Dendritic cell treated with granulocyte-macrophage colony-stimulating factor and Interleukin-4, amounts not matched to agents 40 ng/mL and 50 ng/mL, for 4 days (primary cell): ENCODE measurements at regions of chr9 and their contacts with region 1.

Region 1: DNA sequence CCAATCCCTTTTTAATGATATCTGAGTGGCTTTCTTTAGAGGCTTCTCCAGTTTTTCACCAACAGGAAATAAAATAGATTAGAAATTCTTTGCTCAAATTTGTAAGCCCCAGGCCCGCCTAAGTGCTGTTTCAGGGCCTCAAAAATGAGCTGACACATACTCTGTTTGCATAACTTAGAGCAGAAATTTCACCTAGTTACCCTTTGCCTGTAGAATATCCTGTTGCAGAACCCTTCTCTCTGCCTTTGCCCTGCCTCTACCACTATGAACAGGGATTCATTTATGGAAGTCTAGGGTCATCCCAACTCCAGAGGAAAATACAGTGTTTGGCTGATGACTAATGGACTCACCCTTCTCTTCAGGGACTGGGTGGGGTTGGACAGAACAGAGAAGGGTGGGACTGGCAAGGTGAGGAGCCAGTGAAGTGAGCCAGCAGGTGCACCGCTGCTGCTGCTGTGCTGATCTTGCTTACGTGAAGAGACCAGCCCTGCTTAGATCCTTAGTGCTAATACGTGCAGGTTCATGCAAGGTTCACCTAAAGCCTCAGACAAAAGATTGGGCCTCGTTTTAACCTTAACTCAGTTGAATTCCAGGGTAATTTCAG is 22.8 kb downstream of the OSTF1 start:
- H3K4me3 Mint-ChIP-seq: no peak overlapping the region
- H3K27ac Mint-ChIP-seq: no peak overlapping the region
- H3K4me1 Mint-ChIP-seq: peaks cover 42% of the 10 kb centered on the region
- H3K27me3 Mint-ChIP-seq: no peaks in the 10 kb centered on the region

Region 2: DNA sequence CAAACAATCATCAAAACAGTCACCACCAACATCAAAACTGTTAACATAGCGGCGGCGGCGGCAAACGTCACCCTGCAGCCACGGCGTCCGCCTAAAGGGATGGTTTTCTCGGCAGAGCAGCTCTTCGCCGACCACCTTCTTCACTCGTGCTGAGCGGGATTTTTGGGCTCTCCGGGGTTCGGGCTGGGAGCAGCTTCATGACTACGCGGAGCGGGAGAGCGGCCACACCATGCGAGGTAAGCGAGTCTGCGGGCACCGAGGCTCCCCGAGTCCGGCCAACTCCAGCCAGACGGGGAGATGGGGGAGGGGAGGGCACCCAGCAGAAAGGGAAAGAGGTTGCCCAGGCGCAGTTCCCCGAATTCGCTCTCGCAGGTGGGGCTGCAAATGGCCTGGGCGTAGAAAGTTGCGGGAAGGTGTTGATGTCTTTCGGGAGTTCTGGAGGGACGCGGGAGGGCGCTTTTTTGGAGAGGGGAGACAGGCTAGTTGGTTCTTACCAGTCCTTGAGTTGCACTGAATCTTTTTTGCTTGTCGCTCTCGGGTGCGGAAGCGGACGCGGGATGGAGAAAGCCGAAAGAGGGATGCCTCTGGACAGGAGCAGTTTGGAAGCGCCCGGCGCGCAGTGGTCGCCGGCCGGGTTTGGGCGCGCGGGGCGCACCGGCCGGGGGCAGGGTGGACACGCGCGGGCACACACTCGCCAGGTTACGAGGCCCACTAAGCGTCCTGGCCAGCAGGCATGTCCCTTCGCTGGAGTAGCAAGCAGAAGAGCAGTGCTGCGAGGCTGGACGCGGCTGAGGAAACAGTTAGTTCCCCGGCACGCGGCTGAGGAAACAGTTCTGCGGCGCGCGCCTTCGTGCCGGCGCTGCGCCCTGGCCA is 613.1 kb before region 1 on chr9:
- intact Hi-C with region 1: no loop called
- H3K4me3 Mint-ChIP-seq: peak overlapping the region; percentile 83
- H3K27ac Mint-ChIP-seq: no peak overlapping the region
- H3K4me1 Mint-ChIP-seq: peaks cover 43% of the 10 kb centered on the region
- H3K27me3 Mint-ChIP-seq: peaks cover 66% of the 10 kb centered on the region

Region 3: GRCh38 chr9:75148561-75148960 is 37.4 kb after region 1 on chr9:
- intact Hi-C with region 1: loop called (anchors 5 kb)
- H3K4me3 Mint-ChIP-seq: no peak overlapping the region
- H3K27ac Mint-ChIP-seq: peak overlapping the region; percentile 90
- H3K4me1 Mint-ChIP-seq: peaks cover 41% of the 10 kb centered on the region
- H3K27me3 Mint-ChIP-seq: no peaks in the 10 kb centered on the region